ENCODE measurements at regions of chr14 and their contacts with region 1.

Region 1: GRCh38 chr14:22039938-22040775 is 366.5 kb upstream of the OR4E1 start:
- DNase-seq: peak; percentile 64 to 83 (median 81)
- H3K4me3 ChIP-seq: peak overlapping the region in 1 of 7 experiments; percentile 37
- H3K27ac ChIP-seq: no peak overlapping the region
- H3K4me1 ChIP-seq: peaks cover 0 to 4% (median 2%) of the 10 kb centered on the region in 4 experiments
- H3K27me3 ChIP-seq: no peaks in the 10 kb centered on the region

Region 2: GRCh38 chr14:21997300-21997699 is 42.9 kb before region 1 on chr14:
- CTCF ChIA-PET with region 1: interaction called, 12 read pairs
- POLR2A ChIA-PET with region 1: no interaction called
- DNase-seq: peak; percentile 46 to 73 (median 69)
- H3K4me3 ChIP-seq: no peak overlapping the region
- H3K27ac ChIP-seq: no peak overlapping the region
- H3K4me1 ChIP-seq: peaks cover 0 to 7% (median 3%) of the 10 kb centered on the region in 4 experiments
- H3K27me3 ChIP-seq: no peaks in the 10 kb centered on the region

Region 3: GRCh38 chr14:22026527-22026926 is 13.6 kb before region 1 on chr14:
- CTCF ChIA-PET with region 1: interaction called, 10 read pairs
- POLR2A ChIA-PET with region 1: no interaction called
- DNase-seq: peak in 1 of 3 donors; percentile 22
- H3K4me3 ChIP-seq: no peak overlapping the region
- H3K27ac ChIP-seq: no peak overlapping the region
- H3K4me1 ChIP-seq: peaks cover 0 to 4% (median 0%) of the 10 kb centered on the region in 4 experiments
- H3K27me3 ChIP-seq: no peaks in the 10 kb centered on the region

Region 4: DNA sequence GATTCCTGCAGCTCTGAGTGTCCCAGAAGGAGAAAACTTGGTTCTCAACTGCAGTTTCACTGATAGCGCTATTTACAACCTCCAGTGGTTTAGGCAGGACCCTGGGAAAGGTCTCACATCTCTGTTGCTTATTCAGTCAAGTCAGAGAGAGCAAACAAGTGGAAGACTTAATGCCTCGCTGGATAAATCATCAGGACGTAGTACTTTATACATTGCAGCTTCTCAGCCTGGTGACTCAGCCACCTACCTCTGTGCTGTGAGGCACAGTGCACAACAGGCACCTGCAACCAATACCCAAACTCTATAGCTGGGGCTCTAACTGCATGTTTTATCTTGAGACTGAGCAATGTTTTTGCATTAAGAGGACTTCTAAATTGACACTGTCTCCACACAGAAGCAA is 12.6 kb after region 1 on chr14:
- CTCF ChIA-PET with region 1: interaction called, 12 read pairs
- POLR2A ChIA-PET with region 1: no interaction called
- DNase-seq: peak in 1 of 3 donors; percentile 28
- H3K4me3 ChIP-seq: peak overlapping the region in 1 of 7 experiments; percentile 17
- H3K27ac ChIP-seq: no peak overlapping the region
- H3K4me1 ChIP-seq: peaks cover 2 to 33% (median 22%) of the 10 kb centered on the region in 4 experiments
- H3K27me3 ChIP-seq: no peaks in the 10 kb centered on the region

Region 5: DNA sequence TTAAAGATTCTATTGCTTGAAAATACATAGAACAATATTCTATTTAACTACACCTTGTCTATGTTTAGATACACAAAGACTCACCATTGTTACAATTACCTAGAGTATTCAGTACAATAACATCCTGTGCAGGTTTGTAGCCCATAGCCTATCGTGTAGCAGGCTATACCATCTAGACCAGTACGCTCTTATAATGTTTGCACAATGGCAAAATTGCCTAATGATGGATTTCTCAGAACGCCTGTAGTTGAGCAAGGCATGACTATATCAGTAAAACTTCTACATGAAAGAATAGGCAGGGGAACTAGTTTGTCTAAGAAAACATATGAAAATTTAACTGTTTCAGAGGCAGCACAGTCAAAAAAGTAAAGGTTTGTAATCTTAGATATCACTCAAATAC is 173.0 kb after region 1 on chr14:
- CTCF ChIA-PET with region 1: no interaction called
- POLR2A ChIA-PET with region 1: no interaction called
- DNase-seq: no peak
- H3K4me3 ChIP-seq: no peak overlapping the region
- H3K27ac ChIP-seq: no peak overlapping the region
- H3K4me1 ChIP-seq: no peaks in the 10 kb centered on the region
- H3K27me3 ChIP-seq: peaks cover 0 to 1% (median 0%) of the 10 kb centered on the region in 5 experiments

Measured in common myeloid progenitor, CD34-positive (primary cell).